ENCODE measurements at regions of chr13 and their contacts with region 1.

Region 1: DNA sequence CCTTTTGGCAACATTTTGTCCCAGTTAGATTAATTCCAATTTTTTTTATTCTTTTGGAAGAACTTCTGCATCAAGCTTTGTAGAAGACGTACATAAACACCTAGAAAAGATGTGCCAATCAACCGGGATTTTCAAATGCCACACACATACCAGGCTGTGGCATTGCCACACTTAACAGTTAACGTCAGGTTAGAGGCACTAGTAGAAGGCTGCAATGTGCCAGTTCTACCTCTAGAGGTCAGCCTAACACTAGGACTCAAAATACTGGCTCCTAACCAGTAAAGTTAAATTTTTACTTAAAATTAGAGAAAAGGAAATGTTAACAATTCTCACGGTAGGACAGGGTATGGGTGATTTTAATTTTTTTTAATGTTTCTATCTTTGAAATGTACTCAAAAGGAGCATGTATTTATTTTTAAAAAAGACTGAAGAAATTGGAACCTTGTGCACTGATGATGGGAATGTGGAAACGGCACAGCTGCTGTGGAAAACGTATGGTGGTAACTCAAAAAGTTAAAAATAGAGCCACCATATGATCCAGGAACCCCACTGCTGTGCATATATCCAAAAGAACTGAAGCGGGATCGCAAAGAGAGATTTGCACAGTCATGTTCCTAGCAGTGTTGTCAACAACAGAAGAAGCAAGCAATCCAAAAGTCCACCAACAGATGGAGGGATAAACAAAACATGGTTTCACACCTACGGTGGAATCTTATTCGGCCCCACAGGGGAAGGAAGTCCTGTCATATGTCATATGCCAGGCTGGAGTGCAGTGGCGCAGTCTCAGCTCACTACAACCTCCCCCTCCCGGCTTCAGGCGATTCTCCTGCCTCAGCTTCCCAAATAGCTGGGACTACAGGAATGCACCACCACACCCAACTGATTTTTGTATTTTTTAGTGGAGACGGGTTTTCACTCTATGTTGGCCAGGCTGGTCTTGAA is 30.3 kb downstream of the CRYL1 start:
- DNase-seq: no peak
- ATAC-seq: peak; percentile 85 to 86

Region 2: GRCh38 chr13:20713751-20714150 is 218.4 kb after region 1 on chr13:
- intact Hi-C with region 1: loop called in 1 of 2 experiments (anchors 10 kb)
- DNase-seq: peak; percentile 59
- ATAC-seq: peak; percentile 9 to 72